ENCODE measurements at regions of chr2 and their contacts with region 1.

Region 1: GRCh38 chr2:189751080-189751658 is 11.4 kb downstream of the OSGEPL1 start:
- DNase-seq: peak in 25 of 35 experiments; percentile 4 to 66 (median 28)
- ATAC-seq: peak; percentile 60 to 85 (median 66)
- H3K4me3 ChIP-seq: no peak overlapping the region
- H3K4me3 Mint-ChIP-seq: no peak overlapping the region
- H3K27ac ChIP-seq: no peak overlapping the region
- H3K27ac Mint-ChIP-seq: no peak overlapping the region
- H3K4me1 ChIP-seq: no peaks in the 10 kb centered on the region
- H3K4me1 Mint-ChIP-seq: peaks cover 0 to 3% (median 1%) of the 10 kb centered on the region in 3 donors
- H3K27me3 ChIP-seq: no peaks in the 10 kb centered on the region
- H3K27me3 Mint-ChIP-seq: no peaks in the 10 kb centered on the region

Region 2: DNA sequence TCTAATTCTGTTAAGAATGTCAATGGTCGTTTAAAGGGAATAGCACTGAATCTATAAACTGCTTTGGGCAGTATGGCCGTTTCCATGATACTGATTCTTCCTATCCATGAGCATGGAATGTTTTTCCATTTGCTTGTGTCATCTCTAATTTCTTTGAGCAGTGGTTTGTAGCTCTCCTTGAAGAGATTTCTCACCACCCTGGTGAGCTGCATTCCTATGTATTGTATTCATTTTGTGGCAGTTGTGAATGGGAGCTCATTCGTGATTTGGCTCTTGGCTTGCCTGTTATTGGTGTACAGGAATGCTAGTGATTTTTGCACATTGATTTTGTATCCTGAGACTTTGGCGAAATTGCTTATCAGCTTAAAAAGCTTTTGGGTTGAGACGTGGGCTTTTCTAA is 348.2 kb before region 1 on chr2:
- CTCF ChIA-PET with region 1: no interaction called
- POLR2A ChIA-PET with region 1: no interaction called
- DNase-seq: no peak
- ATAC-seq: no peak
- H3K4me3 ChIP-seq: no peak overlapping the region
- H3K4me3 Mint-ChIP-seq: no peak overlapping the region
- H3K27ac ChIP-seq: no peak overlapping the region
- H3K27ac Mint-ChIP-seq: no peak overlapping the region
- H3K4me1 ChIP-seq: peaks cover 0 to 8% of the 10 kb centered on the region in 2 experiments
- H3K4me1 Mint-ChIP-seq: peaks cover 9 to 12% (median 10%) of the 10 kb centered on the region in 3 donors
- H3K27me3 ChIP-seq: no peaks in the 10 kb centered on the region
- H3K27me3 Mint-ChIP-seq: no peaks in the 10 kb centered on the region

Region 3: DNA sequence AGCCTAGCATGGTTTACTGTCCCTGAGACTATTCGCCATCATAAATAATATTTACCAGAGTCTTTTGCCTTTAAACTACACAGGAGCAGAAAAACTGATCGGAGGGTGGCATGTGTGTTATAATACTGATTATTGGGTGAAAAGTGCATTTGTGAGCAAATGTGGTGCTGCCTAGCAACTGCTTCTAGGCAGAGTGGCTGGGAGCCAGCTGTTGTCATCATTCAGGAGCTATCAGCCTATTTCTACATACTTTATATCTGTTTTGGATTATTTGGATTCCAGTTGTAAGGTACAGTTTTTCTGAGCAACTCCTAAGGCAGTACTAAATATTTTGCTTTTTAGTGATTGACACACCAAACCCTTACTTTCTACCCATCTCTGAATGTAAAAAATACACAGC is 386.4 kb after region 1 on chr2:
- CTCF ChIA-PET with region 1: interaction called in 1 of 2 experiments, 14 read pairs
- POLR2A ChIA-PET with region 1: no interaction called
- DNase-seq: no peak
- ATAC-seq: no peak
- H3K4me3 ChIP-seq: no peak overlapping the region
- H3K4me3 Mint-ChIP-seq: no peak overlapping the region
- H3K27ac ChIP-seq: no peak overlapping the region
- H3K27ac Mint-ChIP-seq: no peak overlapping the region
- H3K4me1 ChIP-seq: no peaks in the 10 kb centered on the region
- H3K4me1 Mint-ChIP-seq: no peaks in the 10 kb centered on the region
- H3K27me3 ChIP-seq: no peaks in the 10 kb centered on the region
- H3K27me3 Mint-ChIP-seq: no peaks in the 10 kb centered on the region

Measured in T-cell (primary cell).